Caco-2 (cell line): ENCODE measurements at regions of chr13 and their contacts with region 1.

Region 1: GRCh38 chr13:73074036-73074435 is 15.2 kb downstream of the KLF5 start:
- DNase-seq: no peak
- H3K4me3 ChIP-seq: no peak overlapping the region
- H3K4me3 Mint-ChIP-seq: peak overlapping the region; percentile 29
- H3K27ac Mint-ChIP-seq: peak overlapping the region; percentile 88
- H3K4me1 ChIP-seq: peaks cover 73% of the 10 kb centered on the region
- H3K4me1 Mint-ChIP-seq: peaks cover 57% of the 10 kb centered on the region
- H3K27me3 ChIP-seq: no peaks in the 10 kb centered on the region
- H3K27me3 Mint-ChIP-seq: no peaks in the 10 kb centered on the region
- CTCF ChIP-seq: no peak

Region 2: DNA sequence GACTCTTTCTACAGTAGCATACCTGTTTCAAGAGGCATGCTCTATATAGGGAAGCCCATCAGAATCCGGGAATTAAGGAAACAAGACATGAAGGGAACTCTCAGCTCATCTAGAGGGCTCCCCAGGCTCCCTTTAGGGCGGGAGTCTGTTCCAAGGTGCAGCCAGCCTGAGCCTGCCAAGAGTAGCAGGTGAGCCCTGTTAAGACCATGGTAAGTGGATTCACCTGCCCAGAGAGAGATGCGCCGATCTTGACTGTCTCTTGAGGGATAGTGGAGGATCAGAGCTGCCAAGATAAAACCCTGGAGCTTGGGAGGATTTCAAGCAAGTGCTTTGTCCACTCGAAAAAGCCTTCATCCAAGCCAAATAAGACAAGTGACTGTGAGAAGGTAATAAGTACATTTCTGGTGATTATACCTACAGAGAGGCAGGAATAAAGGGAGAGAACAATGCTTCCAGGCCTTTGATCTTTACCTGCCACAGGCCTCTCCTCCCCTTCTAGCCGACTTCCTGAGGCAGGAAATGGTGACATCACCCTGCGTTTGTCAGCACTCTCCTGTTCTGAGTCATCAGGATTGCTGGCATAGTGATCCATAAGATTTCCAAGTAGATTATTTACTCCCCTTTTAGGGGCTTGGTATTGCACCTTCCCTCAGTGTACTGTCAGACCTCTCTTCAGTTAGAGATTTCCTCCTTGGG is 16.2 kb after region 1 on chr13:
- CTCF ChIA-PET with region 1: no interaction called
- POLR2A ChIA-PET with region 1: no interaction called
- intact Hi-C with region 1: loop called (anchors 2 kb)
- DNase-seq: peak; percentile 82 to 92
- H3K4me3 ChIP-seq: no peak overlapping the region
- H3K4me3 Mint-ChIP-seq: peak overlapping the region; percentile 46
- H3K27ac Mint-ChIP-seq: peak overlapping the region; percentile 96
- H3K4me1 ChIP-seq: peaks cover 15% of the 10 kb centered on the region
- H3K4me1 Mint-ChIP-seq: peaks cover 24% of the 10 kb centered on the region
- H3K27me3 ChIP-seq: no peaks in the 10 kb centered on the region
- H3K27me3 Mint-ChIP-seq: no peaks in the 10 kb centered on the region
- CTCF ChIP-seq: no peak

Region 3: DNA sequence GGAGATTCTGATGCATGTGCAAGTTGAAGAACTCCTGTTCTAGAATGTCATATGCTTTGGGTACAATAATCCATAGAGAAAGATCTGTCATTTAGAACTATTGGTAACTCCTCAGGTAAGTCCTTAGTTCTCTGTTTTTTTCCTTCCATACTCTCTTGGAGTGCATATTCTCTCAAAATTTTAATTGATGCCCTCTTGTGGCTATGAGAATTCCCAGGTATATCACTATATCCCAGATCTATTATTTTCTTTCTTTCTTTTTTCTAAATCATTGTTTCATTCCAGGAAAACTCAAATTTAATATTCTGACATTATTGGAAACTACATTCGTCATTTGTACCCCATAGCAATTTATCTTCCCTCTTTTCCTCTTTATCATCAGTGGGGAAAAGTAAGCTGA is 470.1 kb after region 1 on chr13:
- CTCF ChIA-PET with region 1: no interaction called
- POLR2A ChIA-PET with region 1: no interaction called
- intact Hi-C with region 1: loop called (anchors 10 kb)
- DNase-seq: no peak
- H3K4me3 ChIP-seq: no peak overlapping the region
- H3K4me3 Mint-ChIP-seq: no peak overlapping the region
- H3K27ac Mint-ChIP-seq: no peak overlapping the region
- H3K4me1 ChIP-seq: no peaks in the 10 kb centered on the region
- H3K4me1 Mint-ChIP-seq: no peaks in the 10 kb centered on the region
- H3K27me3 ChIP-seq: no peaks in the 10 kb centered on the region
- H3K27me3 Mint-ChIP-seq: no peaks in the 10 kb centered on the region
- CTCF ChIP-seq: no peak